Body of pancreas (tissue), 4 donors: ENCODE measurements at regions of chr11 and their contacts with region 1.

Region 1: DNA sequence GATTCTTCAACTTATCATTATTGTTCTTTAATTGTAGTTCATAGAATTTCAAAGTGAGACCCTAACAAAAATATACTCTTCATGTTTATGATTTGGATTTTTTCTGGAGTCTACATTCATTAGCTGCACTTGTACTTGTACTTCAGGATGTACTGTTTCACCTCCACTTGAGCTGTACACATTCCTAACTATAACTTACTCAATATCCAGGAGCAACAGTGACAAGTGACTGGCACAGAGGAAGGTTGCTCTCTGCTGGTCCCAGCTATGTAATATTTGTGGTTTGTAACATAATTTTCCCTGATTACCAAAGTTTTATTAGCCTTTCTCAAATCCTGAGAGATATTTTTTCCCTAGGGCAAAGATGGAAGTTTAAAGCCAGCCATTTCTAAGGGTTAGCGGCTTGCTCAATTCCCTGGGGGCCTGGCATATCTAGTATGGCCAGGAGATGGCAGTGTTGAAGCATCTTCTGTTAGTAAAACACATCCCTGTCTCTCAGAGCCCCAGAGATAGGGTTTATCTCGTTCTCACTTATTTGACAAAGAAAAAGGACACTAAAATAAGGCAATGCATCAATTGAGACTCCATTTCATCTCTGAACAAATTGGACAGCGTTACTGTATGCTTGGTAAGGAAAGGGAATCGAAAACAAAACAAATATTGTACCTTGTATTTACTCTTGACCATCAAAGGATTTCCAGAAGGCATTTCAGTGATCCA is 14.2 kb downstream of the OR52A5 start:
- DNase-seq: peak; percentile 64 to 74 (median 69)
- ATAC-seq: peak; percentile 71
- H3K4me3 ChIP-seq: no peak overlapping the region
- H3K27ac ChIP-seq: no peak overlapping the region
- H3K4me1 ChIP-seq: no peaks in the 10 kb centered on the region
- H3K27me3 ChIP-seq: no peaks in the 10 kb centered on the region
- CTCF ChIP-seq: peak; percentile 47 to 88 (median 69)
- POLR2A ChIP-seq: no peak

Region 2: GRCh38 chr11:5390210-5390609 is 266.2 kb after region 1 on chr11:
- intact Hi-C with region 1: loop called (anchors 10 kb)
- DNase-seq: no peak
- ATAC-seq: no peak
- H3K4me3 ChIP-seq: no peak overlapping the region
- H3K27ac ChIP-seq: no peak overlapping the region
- H3K4me1 ChIP-seq: no peaks in the 10 kb centered on the region
- H3K27me3 ChIP-seq: no peaks in the 10 kb centered on the region
- CTCF ChIP-seq: no peak
- POLR2A ChIP-seq: no peak

Region 3: GRCh38 chr11:5808500-5809121 is 684.6 kb after region 1 on chr11 and contains the start of gene OR52N2:
- intact Hi-C with region 1: loop called (anchors 10 kb)
- DNase-seq: peak; percentile 73 to 84 (median 78)
- ATAC-seq: peak; percentile 92
- H3K4me3 ChIP-seq: peak within 1 kb of the TSS in 1 of 2 donors; percentile 11
- H3K27ac ChIP-seq: no peak within 1 kb of the TSS
- H3K4me1 ChIP-seq: peaks cover 11% of the 10 kb centered on the region
- H3K27me3 ChIP-seq: peaks cover 0 to 3% of the 10 kb centered on the region in 2 donors
- CTCF ChIP-seq: peak; percentile 57 to 88 (median 83)
- POLR2A ChIP-seq: no peak
- total RNA-seq, gene OR52N2: not detected